ENCODE measurements at regions of chr13 and their contacts with region 1.

Region 1: DNA sequence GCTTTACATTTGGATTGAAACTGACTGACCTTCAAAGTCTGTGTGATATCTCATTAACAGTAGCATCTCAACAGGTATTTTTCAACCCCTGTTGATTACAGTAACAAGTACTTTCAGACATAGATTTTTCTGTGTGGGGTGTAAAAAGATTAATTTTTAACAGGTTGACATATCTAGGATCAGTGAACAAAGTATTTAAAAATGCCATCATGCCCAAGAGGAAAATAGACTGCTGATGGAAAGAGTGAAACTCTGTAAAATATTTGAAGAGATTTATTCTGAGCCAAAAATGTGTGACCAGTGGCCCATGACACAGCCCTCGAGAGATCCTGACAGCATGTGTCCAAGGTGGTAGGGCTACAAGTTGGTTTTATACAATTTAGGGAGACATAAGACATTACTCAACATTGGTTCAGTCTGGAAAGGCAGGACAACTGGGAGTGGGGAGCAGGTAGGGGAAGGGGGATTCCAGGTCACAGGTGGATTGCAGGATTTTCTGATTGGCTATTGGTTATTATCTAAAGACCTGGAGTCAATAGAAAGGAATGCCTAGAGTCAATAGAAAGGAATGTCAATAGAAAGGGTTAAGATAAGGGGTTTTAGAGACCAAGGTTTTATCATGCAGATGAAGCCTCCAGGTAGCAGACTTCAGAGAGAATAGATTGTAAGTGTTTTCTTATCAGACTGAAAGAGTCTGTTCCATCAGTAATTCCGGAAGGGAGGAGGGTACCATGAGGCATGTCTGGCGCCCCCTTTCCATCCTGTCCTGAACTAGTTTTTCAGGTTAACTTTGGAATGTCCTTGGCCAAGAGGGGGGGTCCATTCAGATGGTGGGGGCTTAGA is 29.1 kb downstream of the TNFRSF19 start:
- DNase-seq: peak; percentile 90 to 93
- H3K4me3 ChIP-seq: no peak overlapping the region
- H3K4me3 Mint-ChIP-seq: peak overlapping the region; percentile 42
- H3K27ac Mint-ChIP-seq: peak overlapping the region; percentile 94
- H3K4me1 ChIP-seq: peaks cover 35% of the 10 kb centered on the region
- H3K4me1 Mint-ChIP-seq: peaks cover 45% of the 10 kb centered on the region
- H3K27me3 ChIP-seq: no peaks in the 10 kb centered on the region
- H3K27me3 Mint-ChIP-seq: no peaks in the 10 kb centered on the region
- CTCF ChIP-seq: peak in 1 of 2 experiments; percentile 52

Region 2: DNA sequence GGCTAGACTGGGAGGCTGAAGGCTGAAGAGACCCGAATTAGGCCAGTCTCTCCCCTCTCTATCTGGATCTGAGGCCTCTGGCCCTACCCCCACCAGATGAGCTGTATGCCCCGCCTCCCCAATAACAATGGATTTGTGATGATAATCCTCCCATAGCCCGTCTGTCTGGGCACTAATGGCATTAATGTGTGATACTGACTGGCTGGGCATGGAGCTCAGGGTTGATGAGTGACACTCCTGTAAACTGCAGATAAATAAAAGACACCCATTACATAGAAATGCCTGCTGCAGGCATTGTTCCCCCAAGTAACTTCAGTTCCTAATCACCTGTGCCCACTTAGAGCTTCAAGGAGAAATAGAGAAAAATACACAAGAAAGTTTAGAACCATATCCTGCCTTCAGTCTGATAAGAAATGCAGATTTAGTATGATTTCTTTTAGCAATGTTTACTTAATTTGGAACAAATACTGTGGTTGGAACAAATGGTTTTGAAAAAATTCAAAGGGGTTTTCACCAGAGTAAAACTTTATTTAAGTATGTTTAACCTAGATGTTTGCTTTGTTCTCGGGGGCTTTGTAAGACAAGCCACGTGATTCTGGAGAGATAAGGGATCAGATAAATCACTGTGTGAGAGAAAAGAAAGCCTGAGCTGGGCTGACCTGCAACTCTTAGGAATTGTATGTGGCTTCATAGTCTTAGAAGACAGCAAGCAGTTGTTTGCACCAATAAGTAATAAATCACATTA is 31.2 kb after region 1 on chr13:
- CTCF ChIA-PET with region 1: no interaction called
- POLR2A ChIA-PET with region 1: no interaction called
- intact Hi-C with region 1: loop called (anchors 1 kb)
- DNase-seq: peak; percentile 72 to 76
- H3K4me3 ChIP-seq: no peak overlapping the region
- H3K4me3 Mint-ChIP-seq: peak overlapping the region; percentile 52
- H3K27ac Mint-ChIP-seq: peak overlapping the region; percentile 87
- H3K4me1 ChIP-seq: peaks cover 76% of the 10 kb centered on the region
- H3K4me1 Mint-ChIP-seq: peaks cover 47% of the 10 kb centered on the region
- H3K27me3 ChIP-seq: no peaks in the 10 kb centered on the region
- H3K27me3 Mint-ChIP-seq: no peaks in the 10 kb centered on the region
- CTCF ChIP-seq: no peak

Region 3: DNA sequence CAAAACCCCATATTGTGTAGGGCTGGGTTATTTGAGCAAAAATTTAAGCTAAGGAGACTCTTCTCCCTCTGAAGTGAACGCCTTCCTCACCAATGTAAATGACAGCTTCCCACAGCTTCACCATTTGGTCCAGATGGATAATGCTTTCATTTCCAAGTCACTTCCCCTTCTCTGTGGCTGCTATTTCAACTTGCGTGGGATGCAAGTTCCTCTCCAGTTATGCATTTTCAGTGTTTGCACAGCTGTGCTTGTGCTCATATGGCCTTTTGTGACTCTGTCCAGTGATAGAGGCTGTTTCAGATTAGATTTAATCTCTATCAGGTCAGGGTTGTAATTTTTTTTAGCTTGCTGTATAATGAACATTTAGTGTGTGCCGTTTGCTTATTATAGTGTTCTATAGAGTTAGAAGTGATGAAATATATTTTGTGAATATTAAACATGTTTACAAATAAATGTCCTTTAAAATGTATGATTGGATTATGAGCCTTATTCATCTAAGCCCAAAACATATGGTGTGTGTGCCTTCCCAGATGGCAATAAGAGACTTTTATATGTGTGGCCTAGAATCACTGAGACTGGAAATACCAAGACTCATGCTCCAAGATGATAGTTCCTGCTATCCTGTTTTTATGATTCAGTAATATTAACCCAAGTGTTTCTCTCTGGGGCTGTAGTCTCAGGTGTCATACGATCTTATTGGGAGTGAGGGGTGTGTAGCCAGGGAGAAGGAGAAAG is 57.5 kb after region 1 on chr13:
- CTCF ChIA-PET with region 1: no interaction called
- POLR2A ChIA-PET with region 1: no interaction called
- intact Hi-C with region 1: loop called (anchors 1 kb)
- DNase-seq: peak; percentile 50 to 67
- H3K4me3 ChIP-seq: no peak overlapping the region
- H3K4me3 Mint-ChIP-seq: peak overlapping the region; percentile 12
- H3K27ac Mint-ChIP-seq: peak overlapping the region; percentile 67
- H3K4me1 ChIP-seq: peaks cover 49% of the 10 kb centered on the region
- H3K4me1 Mint-ChIP-seq: peaks cover 38% of the 10 kb centered on the region
- H3K27me3 ChIP-seq: no peaks in the 10 kb centered on the region
- H3K27me3 Mint-ChIP-seq: no peaks in the 10 kb centered on the region
- CTCF ChIP-seq: no peak

Measured in Caco-2 (cell line).